ENCODE measurements at regions of chr2 and their contacts with region 1.

Region 1: GRCh38 chr2:210203157-210203947 is 21.9 kb downstream of the ACADL start:
- DNase-seq: no peak
- ATAC-seq: peak; percentile 39
- H3K4me3 ChIP-seq: no peak overlapping the region
- H3K27ac ChIP-seq: no peak overlapping the region
- H3K4me1 ChIP-seq: peaks cover 3% of the 10 kb centered on the region
- H3K27me3 ChIP-seq: no peaks in the 10 kb centered on the region
- CTCF ChIP-seq: no peak

Region 2: GRCh38 chr2:209977386-209978239 is 225.7 kb before region 1 on chr2:
- intact Hi-C with region 1: loop called (anchors 10 kb)
- DNase-seq: no peak
- ATAC-seq: peak; percentile 47
- H3K4me3 ChIP-seq: no peak overlapping the region
- H3K27ac ChIP-seq: no peak overlapping the region
- H3K4me1 ChIP-seq: no peaks in the 10 kb centered on the region
- H3K27me3 ChIP-seq: no peaks in the 10 kb centered on the region
- CTCF ChIP-seq: peak; percentile 67

Measured in upper lobe of right lung (tissue), 1 donor.